ENCODE measurements at regions of chr6 and their contacts with region 1.

Region 1: GRCh38 chr6:157021344-157021992 is 244.3 kb downstream of the ARID1B start:
- DNase-seq: peak; percentile 93
- ATAC-seq: peak; percentile 80
- H3K4me3 ChIP-seq: peak overlapping the region; percentile 84 to 97 (median 87)
- H3K4me3 Mint-ChIP-seq: peak overlapping the region; percentile 94
- H3K27ac ChIP-seq: peak overlapping the region; percentile 98 to 100
- H3K27ac Mint-ChIP-seq: peak overlapping the region; percentile 99
- H3K4me1 ChIP-seq: peaks cover 33 to 40% of the 10 kb centered on the region in 2 donors
- H3K4me1 Mint-ChIP-seq: peaks cover 63% of the 10 kb centered on the region
- H3K27me3 ChIP-seq: no peaks in the 10 kb centered on the region
- H3K27me3 Mint-ChIP-seq: no peaks in the 10 kb centered on the region
- CTCF ChIP-seq: peak; percentile 50

Region 2: GRCh38 chr6:156396068-156396771 is 625.2 kb before region 1 on chr6:
- CTCF ChIA-PET with region 1: no interaction called
- POLR2A ChIA-PET with region 1: interaction called, 4 read pairs
- intact Hi-C with region 1: loop called (anchors 2 kb)
- DNase-seq: peak; percentile 56
- ATAC-seq: peak; percentile 60
- H3K4me3 ChIP-seq: peak overlapping the region in 3 of 5 experiments; percentile 18 to 45 (median 32)
- H3K4me3 Mint-ChIP-seq: peak overlapping the region; percentile 66
- H3K27ac ChIP-seq: peak overlapping the region; percentile 76 to 77
- H3K27ac Mint-ChIP-seq: peak overlapping the region; percentile 91
- H3K4me1 ChIP-seq: peaks cover 73 to 74% of the 10 kb centered on the region in 2 donors
- H3K4me1 Mint-ChIP-seq: peaks cover 72% of the 10 kb centered on the region
- H3K27me3 ChIP-seq: no peaks in the 10 kb centered on the region
- H3K27me3 Mint-ChIP-seq: peaks cover 9% of the 10 kb centered on the region
- CTCF ChIP-seq: no peak

Region 3: GRCh38 chr6:156917213-156917612 is 104.3 kb before region 1 on chr6:
- CTCF ChIA-PET with region 1: no interaction called
- POLR2A ChIA-PET with region 1: no interaction called
- intact Hi-C with region 1: loop called (anchors 2 kb)
- DNase-seq: peak; percentile 23
- ATAC-seq: no peak
- H3K4me3 ChIP-seq: no peak overlapping the region
- H3K4me3 Mint-ChIP-seq: peak overlapping the region; percentile 62
- H3K27ac ChIP-seq: peak overlapping the region; percentile 85 to 88
- H3K27ac Mint-ChIP-seq: peak overlapping the region; percentile 76
- H3K4me1 ChIP-seq: peaks cover 38 to 45% of the 10 kb centered on the region in 2 donors
- H3K4me1 Mint-ChIP-seq: peaks cover 67% of the 10 kb centered on the region
- H3K27me3 ChIP-seq: no peaks in the 10 kb centered on the region
- H3K27me3 Mint-ChIP-seq: no peaks in the 10 kb centered on the region
- CTCF ChIP-seq: no peak

Region 4: GRCh38 chr6:156976216-156977127 is 45.0 kb before region 1 on chr6:
- CTCF ChIA-PET with region 1: no interaction called
- POLR2A ChIA-PET with region 1: no interaction called
- intact Hi-C with region 1: loop called (anchors 5 kb)
- DNase-seq: peak; percentile 24
- ATAC-seq: peak; percentile 42
- H3K4me3 ChIP-seq: peak overlapping the region in 3 of 5 experiments; percentile 29 to 40 (median 40)
- H3K4me3 Mint-ChIP-seq: peak overlapping the region; percentile 74
- H3K27ac ChIP-seq: peak overlapping the region in 1 of 2 donors; percentile 53
- H3K27ac Mint-ChIP-seq: peak overlapping the region; percentile 84
- H3K4me1 ChIP-seq: peaks cover 42 to 72% of the 10 kb centered on the region in 2 donors
- H3K4me1 Mint-ChIP-seq: peaks cover 88% of the 10 kb centered on the region
- H3K27me3 ChIP-seq: no peaks in the 10 kb centered on the region
- H3K27me3 Mint-ChIP-seq: no peaks in the 10 kb centered on the region
- CTCF ChIP-seq: no peak

Region 5: GRCh38 chr6:156988276-156989158 is 33.0 kb before region 1 on chr6:
- CTCF ChIA-PET with region 1: interaction called, 3 read pairs
- POLR2A ChIA-PET with region 1: interaction called, 3 read pairs
- intact Hi-C with region 1: loop called (anchors 1 kb)
- DNase-seq: peak; percentile 69
- ATAC-seq: peak; percentile 84
- H3K4me3 ChIP-seq: peak overlapping the region in 3 of 5 experiments; percentile 21 to 40 (median 27)
- H3K4me3 Mint-ChIP-seq: peak overlapping the region; percentile 72
- H3K27ac ChIP-seq: peak overlapping the region; percentile 53
- H3K27ac Mint-ChIP-seq: peak overlapping the region; percentile 69
- H3K4me1 ChIP-seq: peaks cover 42 to 59% of the 10 kb centered on the region in 2 donors
- H3K4me1 Mint-ChIP-seq: peaks cover 73% of the 10 kb centered on the region
- H3K27me3 ChIP-seq: no peaks in the 10 kb centered on the region
- H3K27me3 Mint-ChIP-seq: no peaks in the 10 kb centered on the region
- CTCF ChIP-seq: no peak

Region 6: DNA sequence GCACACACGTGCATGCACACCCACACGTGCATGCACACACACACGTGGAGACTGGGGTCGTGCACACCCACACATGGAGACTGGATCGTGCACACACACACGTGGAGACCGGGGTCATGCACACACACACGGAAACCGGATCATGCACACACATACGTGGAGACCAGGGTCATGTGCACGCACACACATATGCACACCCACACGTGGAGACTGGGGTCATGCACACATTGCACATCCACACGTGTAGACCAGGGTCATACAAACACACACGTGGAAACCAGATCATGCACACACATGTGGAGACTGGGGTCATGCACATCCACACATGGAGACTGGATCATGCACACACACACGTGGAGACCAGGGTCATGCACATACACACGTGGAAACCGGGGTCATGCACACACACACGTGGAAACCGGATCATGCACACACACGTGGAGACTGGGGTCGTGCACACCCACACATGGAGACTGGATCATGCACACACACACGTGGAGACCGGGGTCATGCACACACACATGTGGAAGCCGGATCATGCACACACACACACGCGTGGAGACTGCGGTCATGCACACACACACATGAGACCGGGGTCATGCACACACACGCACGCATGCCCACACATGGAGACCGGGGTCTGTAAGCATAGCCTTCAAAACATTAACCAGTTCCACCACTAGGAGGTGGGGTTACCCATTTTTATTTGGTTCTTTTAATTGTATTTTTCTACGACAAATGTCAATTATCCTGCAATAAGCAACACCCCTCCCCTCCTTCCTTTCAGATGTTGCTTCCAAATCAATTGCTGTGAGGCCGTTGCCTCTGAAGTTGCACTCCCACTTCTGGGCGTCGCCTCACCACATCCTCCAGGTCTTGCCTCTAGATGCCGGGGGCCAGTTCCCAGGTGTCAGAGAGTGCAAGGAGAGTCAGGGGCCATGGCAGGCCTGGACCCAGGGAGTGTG is 206.0 kb after region 1 on chr6:
- CTCF ChIA-PET with region 1: no interaction called
- POLR2A ChIA-PET with region 1: no interaction called
- intact Hi-C with region 1: no loop called
- DNase-seq: no peak
- ATAC-seq: no peak
- H3K4me3 ChIP-seq: no peak overlapping the region
- H3K4me3 Mint-ChIP-seq: no peak overlapping the region
- H3K27ac ChIP-seq: no peak overlapping the region
- H3K27ac Mint-ChIP-seq: no peak overlapping the region
- H3K4me1 ChIP-seq: peaks cover 28 to 36% of the 10 kb centered on the region in 2 donors
- H3K4me1 Mint-ChIP-seq: peaks cover 33% of the 10 kb centered on the region
- H3K27me3 ChIP-seq: peaks cover 0 to 35% (median 8%) of the 10 kb centered on the region in 4 experiments
- H3K27me3 Mint-ChIP-seq: peaks cover 22% of the 10 kb centered on the region
- CTCF ChIP-seq: peak; percentile 19

Measured in B cell (primary cell).